Panc1 (cell line): ENCODE measurements at regions of chr6 and their contacts with region 1.

Region 1: DNA sequence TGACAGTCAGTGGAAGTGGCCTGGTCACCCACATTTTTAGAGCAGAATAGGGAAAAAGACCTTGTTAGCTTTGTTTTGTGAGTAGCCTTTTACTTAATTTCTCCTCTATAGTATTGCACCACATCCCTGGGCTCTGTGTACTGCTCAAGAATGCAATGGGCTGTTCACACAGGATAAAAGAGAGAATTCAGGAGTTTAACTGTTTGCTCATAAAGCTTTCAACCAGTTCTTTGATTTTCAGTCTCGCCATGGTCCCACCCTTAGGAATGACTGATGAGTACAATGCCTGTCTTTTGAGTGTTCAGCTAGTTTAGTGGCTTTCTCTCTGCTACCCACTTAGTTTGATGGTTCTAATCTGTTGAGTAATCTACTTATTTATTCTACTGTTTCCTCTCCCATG is 129.7 kb downstream of the PLG start:
- DNase-seq: no peak
- ATAC-seq: peak; percentile 56; the same call in 1 of the 2 replicates
- H3K4me3 ChIP-seq: no peak overlapping the region
- H3K27ac ChIP-seq: peak overlapping the region; percentile 54; the same call in 1 of the 2 replicates
- H3K4me1 ChIP-seq: no peaks in the 10 kb centered on the region
- H3K27me3 ChIP-seq: no peaks in the 10 kb centered on the region
- CTCF ChIP-seq: no peak

Region 2: GRCh38 chr6:160750276-160750689 is 81.5 kb before region 1 on chr6:
- CTCF ChIA-PET with region 1: no interaction called
- POLR2A ChIA-PET with region 1: no interaction called
- in situ Hi-C with region 1: no loop called
- intact Hi-C with region 1: no loop called
- DNase-seq: no peak
- ATAC-seq: peak; percentile 76
- H3K4me3 ChIP-seq: no peak overlapping the region
- H3K27ac ChIP-seq: no peak overlapping the region
- H3K4me1 ChIP-seq: no peaks in the 10 kb centered on the region
- H3K27me3 ChIP-seq: no peaks in the 10 kb centered on the region
- CTCF ChIP-seq: peak; percentile 79

Region 3: DNA sequence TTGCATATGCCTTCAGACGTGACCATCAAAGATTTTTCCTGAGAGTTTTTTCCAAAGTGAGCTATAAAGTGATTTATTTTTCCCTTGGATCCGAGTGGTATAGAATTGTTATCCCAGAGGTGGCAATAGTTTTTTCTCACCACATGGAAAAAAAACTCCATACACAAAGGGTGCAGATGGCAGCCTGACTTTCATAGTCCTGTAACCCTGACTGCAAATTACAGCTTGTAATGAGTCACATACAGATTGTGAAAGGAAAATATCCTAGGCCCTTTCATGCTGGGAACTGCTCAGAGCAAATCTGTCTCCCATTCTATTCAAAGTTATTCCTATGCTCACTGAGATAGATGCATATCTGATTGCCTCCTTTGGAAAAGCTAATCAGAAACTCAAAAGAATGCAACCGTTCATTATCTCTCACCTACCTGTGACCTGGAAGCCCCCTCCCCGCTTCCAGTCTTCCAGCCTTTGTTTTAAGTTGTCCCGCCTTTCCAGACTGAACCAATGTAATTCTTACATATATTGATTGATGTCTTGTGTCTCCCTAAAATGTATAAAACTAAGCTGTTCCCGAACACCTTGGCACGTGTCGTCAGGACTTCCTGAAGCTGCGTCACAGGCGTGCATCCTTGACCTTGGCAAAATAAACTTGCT is 51.1 kb after region 1 on chr6:
- CTCF ChIA-PET with region 1: no interaction called
- POLR2A ChIA-PET with region 1: no interaction called
- in situ Hi-C with region 1: loop called (anchors 5 kb)
- intact Hi-C with region 1: no loop called
- DNase-seq: no peak
- ATAC-seq: peak; percentile 68; the same call in 1 of the 2 replicates
- H3K4me3 ChIP-seq: no peak overlapping the region
- H3K27ac ChIP-seq: no peak overlapping the region
- H3K4me1 ChIP-seq: no peaks in the 10 kb centered on the region; the same call in 1 of the 2 replicates
- H3K27me3 ChIP-seq: no peaks in the 10 kb centered on the region
- CTCF ChIP-seq: no peak